ENCODE measurements at regions of chr11 and their contacts with region 1.

Region 1: GRCh38 chr11:19071255-19071654 is 10.7 kb upstream of the MRGPRX2 start:
- DNase-seq: peak; percentile 87
- ATAC-seq: peak; percentile 96
- H3K4me3 ChIP-seq: peak overlapping the region; percentile 35; the same call in 1 of the 2 replicates
- H3K27ac ChIP-seq: no peak overlapping the region
- H3K4me1 ChIP-seq: peaks cover 14% of the 10 kb centered on the region
- H3K27me3 ChIP-seq: no peaks in the 10 kb centered on the region
- CTCF ChIP-seq: peak; percentile 98

Region 2: GRCh38 chr11:18972336-18972735 is 98.9 kb before region 1 on chr11:
- CTCF ChIA-PET with region 1: interaction called, 10 read pairs
- POLR2A ChIA-PET with region 1: no interaction called
- intact Hi-C with region 1: no loop called
- DNase-seq: no peak
- ATAC-seq: no peak
- H3K4me3 ChIP-seq: no peak overlapping the region
- H3K27ac ChIP-seq: no peak overlapping the region
- H3K4me1 ChIP-seq: no peaks in the 10 kb centered on the region; the same call in 1 of the 2 replicates
- H3K27me3 ChIP-seq: 0 out of 2 replicates have a peak, but pooled peaks cover 6% of the 10 kb centered on the region
- CTCF ChIP-seq: no peak

Region 3: DNA sequence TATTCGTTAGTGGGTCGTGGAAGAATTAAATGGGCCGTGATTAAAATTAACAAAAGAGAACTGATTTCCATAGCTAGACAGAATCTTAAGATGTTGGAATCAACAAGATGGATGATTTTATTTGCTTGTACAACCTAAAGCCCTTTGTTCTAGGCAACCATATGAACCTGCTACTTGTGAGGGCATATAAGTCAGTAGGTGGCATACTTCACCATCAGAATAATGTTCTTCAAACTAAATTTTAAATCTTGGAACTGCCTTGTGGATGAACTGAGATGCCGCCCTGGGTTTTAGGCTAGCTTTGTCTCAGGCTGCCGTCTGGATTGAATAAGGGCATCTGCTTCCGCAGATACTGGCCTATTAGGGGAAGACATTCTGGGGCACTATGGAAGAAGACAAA is 89.6 kb after region 1 on chr11:
- CTCF ChIA-PET with region 1: no interaction called
- POLR2A ChIA-PET with region 1: no interaction called
- intact Hi-C with region 1: loop called (anchors 10 kb)
- DNase-seq: peak; percentile 11
- ATAC-seq: peak; percentile 48
- H3K4me3 ChIP-seq: no peak overlapping the region
- H3K27ac ChIP-seq: no peak overlapping the region
- H3K4me1 ChIP-seq: no peaks in the 10 kb centered on the region
- H3K27me3 ChIP-seq: no peaks in the 10 kb centered on the region
- CTCF ChIP-seq: peak; percentile 35; the same call in 1 of the 2 replicates

Region 4: GRCh38 chr11:19259487-19260345 is 188.5 kb after region 1 on chr11:
- CTCF ChIA-PET with region 1: interaction called, 4 read pairs
- POLR2A ChIA-PET with region 1: no interaction called
- intact Hi-C with region 1: loop called (anchors 1 kb)
- DNase-seq: peak; percentile 76
- ATAC-seq: peak; percentile 84
- H3K4me3 ChIP-seq: peak overlapping the region; percentile 58
- H3K27ac ChIP-seq: no peak overlapping the region
- H3K4me1 ChIP-seq: no peaks in the 10 kb centered on the region
- H3K27me3 ChIP-seq: no peaks in the 10 kb centered on the region
- CTCF ChIP-seq: peak; percentile 91

Region 5: GRCh38 chr11:19311308-19312030 is 240.2 kb after region 1 on chr11:
- CTCF ChIA-PET with region 1: no interaction called
- POLR2A ChIA-PET with region 1: no interaction called
- intact Hi-C with region 1: loop called (anchors 2 kb)
- DNase-seq: peak; percentile 69
- ATAC-seq: peak; percentile 90
- H3K4me3 ChIP-seq: no peak overlapping the region
- H3K27ac ChIP-seq: no peak overlapping the region
- H3K4me1 ChIP-seq: no peaks in the 10 kb centered on the region
- H3K27me3 ChIP-seq: no peaks in the 10 kb centered on the region
- CTCF ChIP-seq: peak; percentile 82